ENCODE measurements at regions of chr6 and their contacts with region 1.

Region 1: GRCh38 chr6:109526905-109527628 is 44.0 kb upstream of the ZBTB24 start:
- DNase-seq: peak in 2 of 4 donors; percentile 57 to 73
- ATAC-seq: peak; percentile 90
- H3K4me3 ChIP-seq: no peak overlapping the region
- H3K27ac ChIP-seq: no peak overlapping the region
- H3K4me1 ChIP-seq: no peaks in the 10 kb centered on the region
- H3K27me3 ChIP-seq: no peaks in the 10 kb centered on the region
- CTCF ChIP-seq: peak; percentile 51 to 63

Region 2: GRCh38 chr6:109202409-109203284 is 324.4 kb before region 1 on chr6:
- intact Hi-C with region 1: no loop called
- DNase-seq: no peak
- ATAC-seq: no peak
- H3K4me3 ChIP-seq: no peak overlapping the region
- H3K27ac ChIP-seq: no peak overlapping the region
- H3K4me1 ChIP-seq: no peaks in the 10 kb centered on the region
- H3K27me3 ChIP-seq: no peaks in the 10 kb centered on the region
- CTCF ChIP-seq: no peak

Region 3: GRCh38 chr6:109318328-109318876 is 208.7 kb before region 1 on chr6:
- intact Hi-C with region 1: no loop called
- DNase-seq: no peak
- ATAC-seq: no peak
- H3K4me3 ChIP-seq: no peak overlapping the region
- H3K27ac ChIP-seq: no peak overlapping the region
- H3K4me1 ChIP-seq: peaks cover 0 to 12% of the 10 kb centered on the region in 2 donors
- H3K27me3 ChIP-seq: no peaks in the 10 kb centered on the region
- CTCF ChIP-seq: no peak

Region 4: GRCh38 chr6:110053395-110054240 is 526.6 kb after region 1 on chr6:
- intact Hi-C with region 1: loop called in 1 of 2 experiments (anchors 10 kb)
- DNase-seq: peak in 1 of 4 donors; percentile 63
- ATAC-seq: peak; percentile 87
- H3K4me3 ChIP-seq: no peak overlapping the region
- H3K27ac ChIP-seq: no peak overlapping the region
- H3K4me1 ChIP-seq: no peaks in the 10 kb centered on the region
- H3K27me3 ChIP-seq: no peaks in the 10 kb centered on the region
- CTCF ChIP-seq: peak; percentile 62 to 63